Left colon (tissue), 2 donors: ENCODE measurements at regions of chr10 and their contacts with region 1.

Region 1: GRCh38 chr10:122648599-122649428 is 50.8 kb downstream of the C10orf120 start:
- DNase-seq: peak in 1 of 2 donors; percentile 35
- ATAC-seq: peak; percentile 65

Region 2: DNA sequence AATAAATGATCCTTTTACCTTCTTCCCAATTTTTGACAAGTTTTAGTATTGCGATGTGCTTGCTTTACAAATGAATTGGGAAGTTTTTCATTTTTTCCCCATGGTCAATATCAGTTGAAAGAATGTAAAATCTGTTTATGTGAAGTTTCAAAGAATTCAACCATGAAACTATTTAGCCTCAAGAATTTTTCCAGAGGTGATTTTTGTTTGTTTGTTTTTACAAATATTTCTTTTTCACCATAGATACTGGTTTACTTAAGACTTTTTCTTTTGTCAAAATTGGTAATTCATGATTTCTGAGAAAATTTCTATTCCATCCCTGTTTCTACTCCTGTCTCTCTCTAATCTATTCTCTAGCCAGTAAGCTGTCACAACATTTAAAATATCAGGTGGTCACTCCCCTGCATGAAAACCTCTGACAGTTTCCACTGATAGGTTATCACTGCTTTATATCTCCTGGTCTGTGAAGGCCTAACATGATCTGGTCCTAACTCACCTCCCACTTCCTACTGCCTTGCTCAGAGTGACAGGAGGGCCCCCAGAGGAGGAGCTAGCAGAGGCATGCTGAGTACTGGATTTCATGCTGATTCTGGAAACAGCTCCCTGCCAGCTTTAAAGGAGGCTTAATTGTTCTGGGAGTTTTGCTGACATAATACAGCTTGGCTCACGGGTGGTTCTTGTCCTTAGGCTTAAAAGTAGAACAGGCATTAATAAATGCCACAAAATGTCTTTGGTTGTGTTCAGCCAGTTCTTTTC is 202.0 kb before region 1 on chr10:
- intact Hi-C with region 1: no loop called
- DNase-seq: no peak
- ATAC-seq: no peak

Region 3: GRCh38 chr10:122703439-122704118 is 54.8 kb after region 1 on chr10:
- intact Hi-C with region 1: loop called in 1 of 2 experiments (anchors 2 kb)
- DNase-seq: peak; percentile 37 to 60
- ATAC-seq: peak; percentile 87

Region 4: GRCh38 chr10:122798751-122799150 is 149.9 kb after region 1 on chr10:
- intact Hi-C with region 1: no loop called
- DNase-seq: no peak
- ATAC-seq: no peak

Region 5: DNA sequence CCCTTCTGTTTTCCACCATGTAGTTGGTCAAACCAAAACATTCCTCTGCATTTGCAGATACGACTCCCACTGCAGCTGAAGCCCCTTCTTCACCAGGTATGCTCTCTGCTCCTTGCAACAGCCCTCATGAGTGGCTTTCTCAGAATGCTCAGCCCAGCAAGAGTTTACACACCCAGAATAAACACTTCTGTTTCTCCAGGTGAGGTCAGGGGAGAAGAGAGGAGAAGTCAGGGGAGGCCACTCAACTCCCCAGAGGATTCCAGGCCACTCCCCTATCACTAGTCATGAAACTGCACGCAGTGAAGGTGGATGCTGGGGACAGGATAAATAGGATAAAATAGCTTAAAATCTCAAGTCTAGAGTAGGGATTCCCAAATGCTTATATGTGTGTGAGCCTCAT is 165.7 kb after region 1 on chr10:
- intact Hi-C with region 1: no loop called
- DNase-seq: no peak
- ATAC-seq: no peak